Endothelial cell of umbilical vein (primary cell): ENCODE measurements at regions of chr9 and their contacts with region 1.

Region 1: DNA sequence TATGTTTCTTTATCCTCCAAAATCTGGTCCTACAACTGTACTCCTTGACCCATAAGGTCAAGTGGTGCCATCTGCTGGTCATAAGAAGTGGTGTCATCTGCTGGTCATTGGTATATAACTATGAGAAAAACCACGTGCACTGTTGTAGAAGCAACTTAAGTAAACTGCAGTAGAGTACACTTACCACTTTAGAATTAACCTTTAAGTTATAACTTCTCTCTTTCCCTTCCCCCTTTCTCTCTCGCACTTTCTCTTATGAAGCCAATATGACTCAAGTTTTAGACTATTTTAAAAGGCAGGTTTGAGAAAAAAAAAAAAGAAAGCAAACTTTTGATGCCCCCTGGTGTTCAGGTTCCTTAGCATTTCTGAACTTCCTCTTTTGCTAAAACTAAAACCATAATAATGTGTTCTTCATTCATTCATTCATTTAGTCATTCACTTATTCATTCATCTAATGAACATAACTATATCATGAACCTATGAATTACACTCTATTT is 12.8 kb upstream of the MTAP start:
- DNase-seq: peak; percentile 85
- H3K4me3 ChIP-seq: peak overlapping the region in 1 of 3 experiments; percentile 69
- H3K27ac ChIP-seq: no peak overlapping the region
- H3K4me1 ChIP-seq: no peaks in the 10 kb centered on the region
- H3K27me3 ChIP-seq: peaks cover 5 to 23% of the 10 kb centered on the region in 2 experiments
- CTCF ChIP-seq: peak; percentile 45 to 57
- POLR2A ChIP-seq: no peak

Region 2: GRCh38 chr9:21086538-21086937 is 703.1 kb before region 1 on chr9:
- CTCF ChIA-PET with region 1: no interaction called
- POLR2A ChIA-PET with region 1: no interaction called
- dilution Hi-C with region 1: no loop called
- intact Hi-C with region 1: no loop called
- DNase-seq: no peak
- H3K4me3 ChIP-seq: no peak overlapping the region
- H3K27ac ChIP-seq: no peak overlapping the region
- H3K4me1 ChIP-seq: peaks cover 11% of the 10 kb centered on the region
- H3K27me3 ChIP-seq: no peaks in the 10 kb centered on the region
- CTCF ChIP-seq: no peak
- POLR2A ChIP-seq: no peak

Region 3: GRCh38 chr9:21239911-21240310 is 549.7 kb before region 1 on chr9 and contains the start of gene IFNA14:
- CTCF ChIA-PET with region 1: interaction called, 21 read pairs
- POLR2A ChIA-PET with region 1: no interaction called
- dilution Hi-C with region 1: no loop called
- intact Hi-C with region 1: loop called (anchors 1 kb)
- DNase-seq: no peak
- H3K4me3 ChIP-seq: no peak within 1 kb of the TSS
- H3K27ac ChIP-seq: no peak within 1 kb of the TSS
- H3K4me1 ChIP-seq: no peaks in the 10 kb centered on the region
- H3K27me3 ChIP-seq: peaks cover 11 to 28% of the 10 kb centered on the region in 2 experiments
- CTCF ChIP-seq: no peak
- POLR2A ChIP-seq: no peak
- total RNA-seq, gene IFNA14: not detected in 2 replicates

Region 4: DNA sequence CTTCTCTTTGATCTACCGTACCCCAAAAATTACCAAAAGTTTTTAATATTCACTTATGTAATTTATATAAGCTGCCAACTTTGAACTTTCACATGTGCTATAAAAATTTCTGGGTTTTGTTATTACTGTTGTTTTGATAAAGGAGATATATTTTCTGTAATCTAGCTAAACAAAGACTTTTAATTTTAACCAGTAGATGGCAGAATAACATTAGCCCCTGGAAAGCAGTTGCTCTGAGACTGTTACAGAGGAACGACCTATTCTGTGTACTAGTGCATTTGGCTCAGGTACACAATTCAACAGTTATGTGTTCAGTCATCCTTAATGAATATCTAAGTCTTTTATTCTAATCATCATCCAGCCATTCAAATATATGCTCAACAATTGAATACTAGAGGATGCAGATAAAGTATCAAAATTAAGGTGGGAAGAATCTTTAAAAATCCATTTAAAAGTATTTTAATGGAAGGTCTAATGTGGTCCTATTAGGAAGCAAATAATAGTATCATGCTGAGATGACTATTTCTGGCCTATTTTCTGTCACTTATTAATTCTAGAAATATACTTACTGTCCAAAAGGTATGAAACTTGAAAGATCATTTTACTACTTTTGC is 463.0 kb before region 1 on chr9:
- CTCF ChIA-PET with region 1: interaction called, 8 read pairs
- POLR2A ChIA-PET with region 1: no interaction called
- dilution Hi-C with region 1: no loop called
- intact Hi-C with region 1: loop called (anchors 1 kb)
- DNase-seq: peak; percentile 54
- H3K4me3 ChIP-seq: no peak overlapping the region
- H3K27ac ChIP-seq: no peak overlapping the region
- H3K4me1 ChIP-seq: peaks cover 15% of the 10 kb centered on the region
- H3K27me3 ChIP-seq: no peaks in the 10 kb centered on the region
- CTCF ChIP-seq: peak; percentile 33 to 46
- POLR2A ChIP-seq: no peak

Region 5: DNA sequence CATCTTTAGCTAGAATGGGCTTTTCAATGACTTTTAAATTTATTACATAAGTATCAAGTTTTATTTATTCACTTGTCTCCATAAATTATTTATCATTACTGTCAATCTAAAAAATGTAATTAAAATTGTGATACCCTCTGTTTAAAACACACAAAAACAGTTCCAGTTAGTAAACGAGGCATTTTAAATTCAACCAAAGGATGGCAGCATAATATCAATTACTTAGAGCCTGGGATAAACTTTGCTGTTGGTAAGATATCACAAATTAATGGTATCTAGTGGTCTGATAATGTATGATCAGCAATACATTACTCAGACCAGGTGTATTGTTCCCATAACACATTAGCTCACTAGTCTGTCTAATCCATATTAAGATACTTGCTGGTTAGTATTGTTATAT is 297.8 kb before region 1 on chr9:
- CTCF ChIA-PET with region 1: interaction called, 5 read pairs
- POLR2A ChIA-PET with region 1: no interaction called
- dilution Hi-C with region 1: no loop called
- intact Hi-C with region 1: loop called (anchors 1 kb)
- DNase-seq: peak; percentile 21
- H3K4me3 ChIP-seq: no peak overlapping the region
- H3K27ac ChIP-seq: no peak overlapping the region
- H3K4me1 ChIP-seq: no peaks in the 10 kb centered on the region
- H3K27me3 ChIP-seq: no peaks in the 10 kb centered on the region
- CTCF ChIP-seq: no peak
- POLR2A ChIP-seq: no peak

Region 6: GRCh38 chr9:21709464-21710058 is 80.0 kb before region 1 on chr9:
- CTCF ChIA-PET with region 1: interaction called, 20 read pairs
- POLR2A ChIA-PET with region 1: no interaction called
- dilution Hi-C with region 1: no loop called
- intact Hi-C with region 1: loop called (anchors 1 kb)
- DNase-seq: peak; percentile 69
- H3K4me3 ChIP-seq: no peak overlapping the region
- H3K27ac ChIP-seq: no peak overlapping the region
- H3K4me1 ChIP-seq: no peaks in the 10 kb centered on the region
- H3K27me3 ChIP-seq: no peaks in the 10 kb centered on the region
- CTCF ChIP-seq: peak; percentile 67 to 74
- POLR2A ChIP-seq: no peak